ENCODE measurements at regions of chr1 and their contacts with region 1.

Region 1: DNA sequence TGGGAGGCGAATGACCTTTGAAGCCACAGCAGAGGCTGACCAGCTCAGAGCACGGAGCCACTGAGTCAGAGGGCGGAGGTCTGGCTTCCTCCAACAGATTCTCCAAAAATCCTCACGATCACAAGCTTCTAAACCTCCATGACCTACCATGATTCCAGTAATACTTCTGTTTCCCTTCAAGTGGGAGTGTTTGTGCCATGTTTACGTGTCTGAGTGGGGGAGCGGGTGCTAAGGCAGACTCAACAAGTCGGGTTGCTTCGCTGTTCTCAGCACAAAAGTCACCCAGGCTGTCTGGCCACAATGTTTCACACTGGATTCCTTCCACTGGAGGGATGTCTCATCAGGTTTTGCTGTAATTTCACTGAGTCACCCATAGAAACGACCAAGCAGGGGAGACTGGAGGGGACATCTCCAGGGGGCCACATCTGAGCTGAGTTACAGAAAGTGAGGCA is 86.2 kb downstream of the SLC66A1 start:
- DNase-seq: no peak
- H3K4me3 ChIP-seq: no peak overlapping the region
- H3K27ac ChIP-seq: peak overlapping the region in 1 of 3 donors; percentile 3
- H3K4me1 ChIP-seq: peaks cover 42 to 62% of the 10 kb centered on the region in 2 donors
- H3K27me3 ChIP-seq: no peaks in the 10 kb centered on the region
- CTCF ChIP-seq: no peak
- POLR2A ChIP-seq: no peak

Region 2: DNA sequence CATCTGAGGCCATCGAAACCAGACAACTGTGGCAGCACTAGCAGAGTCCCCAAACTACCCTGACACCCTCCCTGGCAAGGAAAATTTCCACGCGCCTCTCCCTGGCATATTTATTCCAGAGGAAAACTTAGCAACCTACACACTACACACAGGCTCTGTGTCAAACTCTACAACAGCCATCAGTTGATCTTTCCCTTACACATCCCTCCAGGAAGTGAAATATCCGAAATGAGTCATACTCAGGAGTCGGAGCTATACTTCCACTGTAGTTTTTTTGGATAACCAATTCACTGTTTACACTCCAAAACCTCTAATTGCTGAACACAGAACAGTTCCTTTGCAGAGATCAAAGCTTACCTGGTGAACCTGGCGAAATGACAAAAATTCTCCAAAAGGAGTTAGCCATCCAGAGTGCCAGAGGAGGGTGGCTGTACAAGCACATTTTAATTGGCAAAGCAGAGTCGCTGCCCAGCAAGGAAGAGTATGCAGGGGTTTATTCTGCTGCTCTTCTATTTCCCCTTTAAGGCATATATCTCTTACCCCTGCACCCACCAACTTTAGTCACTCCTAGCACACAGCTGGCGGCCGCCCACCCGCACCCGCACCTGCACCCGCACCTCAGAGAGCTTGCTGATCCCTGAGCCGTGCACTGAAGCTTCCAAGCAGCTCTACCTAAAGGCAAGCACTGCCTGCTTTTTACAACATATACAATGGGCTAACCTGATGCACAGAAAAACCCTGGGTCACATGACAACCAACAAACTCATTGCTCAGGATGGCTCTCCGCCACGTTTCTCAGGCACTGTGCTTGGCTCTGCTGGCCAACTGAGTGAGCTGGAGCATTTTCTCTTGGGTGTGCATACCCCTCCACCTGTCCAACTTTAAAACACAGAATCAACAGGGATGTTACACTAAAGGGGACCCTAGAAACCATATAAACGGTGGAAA is 32.1 kb after region 1 on chr1:
- intact Hi-C with region 1: loop called (anchors 5 kb)
- DNase-seq: peak; percentile 51 to 55
- H3K4me3 ChIP-seq: no peak overlapping the region
- H3K27ac ChIP-seq: peak overlapping the region; percentile 61 to 78 (median 75)
- H3K4me1 ChIP-seq: peaks cover 78 to 91% of the 10 kb centered on the region in 2 donors
- H3K27me3 ChIP-seq: no peaks in the 10 kb centered on the region
- CTCF ChIP-seq: no peak
- POLR2A ChIP-seq: no peak